AG04449 (cell line): ENCODE measurements at regions of chr11 and their contacts with region 1.

Region 1: DNA sequence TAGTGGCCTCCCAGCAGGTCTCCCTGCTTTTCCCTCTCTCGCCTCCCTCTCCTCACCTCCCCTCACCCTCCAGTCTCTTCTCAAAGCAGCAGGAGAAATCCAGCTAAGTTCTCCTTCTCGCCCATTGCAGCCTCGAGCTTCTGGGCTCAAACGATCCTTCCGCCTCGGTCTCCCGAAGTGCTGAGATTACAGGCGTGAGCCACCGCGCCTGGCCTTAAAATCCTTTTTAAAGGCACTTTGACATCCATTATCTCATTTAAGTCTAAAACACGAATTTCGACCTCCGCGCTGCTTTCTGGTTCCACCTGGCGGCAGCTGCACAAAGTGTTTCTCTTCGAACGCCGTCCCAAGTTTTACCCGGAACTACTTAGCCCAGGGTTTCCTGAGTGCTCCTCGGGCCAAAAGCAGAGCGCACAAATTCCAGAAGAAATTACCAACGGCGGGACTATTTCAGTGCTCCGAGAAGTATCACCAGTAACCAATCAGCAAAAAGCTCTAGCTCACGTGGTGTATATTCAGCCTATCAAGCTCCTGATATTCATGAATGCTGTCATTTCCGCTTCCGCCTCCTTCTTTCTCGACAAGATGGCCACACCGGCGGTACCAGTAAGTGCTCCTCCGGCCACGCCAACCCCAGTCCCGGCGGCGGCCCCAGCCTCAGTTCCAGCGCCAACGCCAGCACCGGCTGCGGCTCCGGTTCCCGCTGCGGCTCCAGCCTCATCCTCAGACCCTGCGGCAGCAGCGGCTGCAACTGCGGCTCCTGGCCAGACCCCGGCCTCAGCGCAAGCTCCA is at the start of gene EIF3F:
- DNase-seq: peak; percentile 99
- H3K4me3 ChIP-seq: peak within 1 kb of the TSS; percentile 77
- CTCF ChIP-seq: peak; percentile 75

Region 2: DNA sequence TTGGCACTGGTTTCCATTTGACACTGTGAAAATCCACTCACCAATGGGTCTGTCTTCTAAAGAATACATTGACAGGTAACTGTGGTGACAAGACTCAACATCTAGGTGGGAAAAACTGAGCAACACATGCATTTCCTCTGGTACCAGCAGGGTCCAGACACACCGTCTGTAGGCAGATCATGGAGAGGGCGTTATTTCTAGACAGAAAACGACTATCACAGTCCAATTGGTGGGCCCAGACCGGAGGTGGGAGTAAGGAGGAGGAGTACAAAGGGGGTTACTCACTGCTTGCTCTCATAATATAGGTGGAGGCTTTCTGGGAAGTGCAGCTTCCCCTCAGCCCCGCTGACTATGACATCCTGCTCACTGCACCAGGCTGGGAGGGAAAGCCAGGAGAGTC is 290.5 kb before region 1 on chr11:
- CTCF ChIA-PET with region 1: interaction called, 14 read pairs
- POLR2A ChIA-PET with region 1: no interaction called
- DNase-seq: no peak
- H3K4me3 ChIP-seq: no peak overlapping the region
- CTCF ChIP-seq: no peak

Region 3: DNA sequence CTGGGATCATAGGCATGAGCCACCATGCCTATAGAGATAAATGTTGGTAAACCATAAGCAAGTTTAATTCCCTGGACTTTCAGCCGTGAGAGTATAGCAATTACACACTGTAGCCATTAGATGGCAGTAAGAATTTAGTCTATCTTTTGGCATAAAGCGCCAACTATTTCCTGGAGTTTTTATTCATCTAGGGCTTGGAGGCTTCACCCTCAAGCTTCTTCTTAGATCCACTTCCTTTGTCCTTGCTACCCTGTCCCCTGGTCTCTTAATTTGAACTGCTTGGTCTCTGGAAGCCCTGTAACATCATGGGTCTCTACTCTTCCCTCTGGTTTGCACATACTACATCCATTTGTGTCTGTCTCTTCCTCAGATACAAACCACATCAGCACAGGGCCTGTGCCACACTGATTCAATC is 94.1 kb before region 1 on chr11:
- CTCF ChIA-PET with region 1: interaction called, 298 read pairs
- POLR2A ChIA-PET with region 1: interaction called, 13 read pairs
- DNase-seq: peak; percentile 28
- H3K4me3 ChIP-seq: no peak overlapping the region
- CTCF ChIP-seq: peak; percentile 56

Region 4: DNA sequence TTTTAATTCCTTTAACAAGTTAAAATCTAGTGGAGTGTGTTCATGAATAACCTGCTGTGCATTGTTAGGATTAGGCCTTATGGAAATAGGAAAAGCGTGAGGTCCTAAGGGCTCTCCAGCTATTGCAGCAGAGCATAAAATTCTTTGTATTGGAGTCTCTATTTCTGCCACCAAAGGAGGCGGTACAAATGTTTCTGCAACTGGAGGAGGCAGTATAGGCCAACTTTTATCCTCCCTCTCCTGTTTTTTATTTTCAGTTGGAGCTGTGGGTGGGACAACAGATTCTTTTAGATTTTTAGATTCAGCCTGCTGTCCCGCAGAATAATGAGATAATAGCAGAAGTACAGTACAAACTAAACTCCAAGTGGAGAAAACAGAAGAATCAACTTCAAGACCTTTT is 82.0 kb before region 1 on chr11:
- CTCF ChIA-PET with region 1: interaction called, 337 read pairs
- POLR2A ChIA-PET with region 1: interaction called, 8 read pairs
- DNase-seq: no peak
- H3K4me3 ChIP-seq: no peak overlapping the region
- CTCF ChIP-seq: peak; percentile 28

Region 5: DNA sequence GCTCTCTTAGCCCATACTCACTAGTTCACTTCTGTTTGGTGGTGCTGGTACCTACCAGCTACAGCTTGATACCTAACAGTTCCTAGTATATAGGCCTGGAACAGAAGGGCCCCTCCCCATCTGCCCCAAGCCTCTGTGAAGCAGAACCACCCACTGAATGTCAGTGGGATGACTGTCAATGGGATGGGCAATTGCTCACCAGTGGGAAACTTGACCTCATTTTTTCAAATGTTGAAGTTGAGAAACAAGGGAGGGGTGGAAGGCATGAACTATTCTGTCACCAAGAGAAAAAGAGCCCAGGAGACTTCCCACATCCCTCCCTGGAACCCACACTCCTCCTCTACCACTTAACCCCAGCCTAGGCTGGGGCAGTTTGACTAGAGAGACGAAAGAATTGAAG is 21.6 kb before region 1 on chr11 and contains the start of gene NLRP10:
- CTCF ChIA-PET with region 1: interaction called, 18 read pairs
- POLR2A ChIA-PET with region 1: interaction called, 6 read pairs
- DNase-seq: peak; percentile 77
- H3K4me3 ChIP-seq: peak within 1 kb of the TSS; percentile 25
- CTCF ChIP-seq: no peak

Region 6: GRCh38 chr11:8092587-8093424 is 105.8 kb after region 1 on chr11:
- CTCF ChIA-PET with region 1: interaction called, 25 read pairs
- POLR2A ChIA-PET with region 1: no interaction called
- DNase-seq: no peak
- H3K4me3 ChIP-seq: no peak overlapping the region
- CTCF ChIP-seq: peak; percentile 76